ENCODE measurements at regions of chr9 and their contacts with region 1.

Region 1: GRCh38 chr9:34591248-34591916 is 1.9 kb upstream of the CNTFR start:
- DNase-seq: peak; percentile 89
- H3K4me3 ChIP-seq: peak overlapping the region; percentile 31
- H3K27ac ChIP-seq: no peak overlapping the region
- H3K4me1 ChIP-seq: peaks cover 18% of the 10 kb centered on the region
- H3K27me3 ChIP-seq: peaks cover 53% of the 10 kb centered on the region
- CTCF ChIP-seq: peak; percentile 89

Region 2: DNA sequence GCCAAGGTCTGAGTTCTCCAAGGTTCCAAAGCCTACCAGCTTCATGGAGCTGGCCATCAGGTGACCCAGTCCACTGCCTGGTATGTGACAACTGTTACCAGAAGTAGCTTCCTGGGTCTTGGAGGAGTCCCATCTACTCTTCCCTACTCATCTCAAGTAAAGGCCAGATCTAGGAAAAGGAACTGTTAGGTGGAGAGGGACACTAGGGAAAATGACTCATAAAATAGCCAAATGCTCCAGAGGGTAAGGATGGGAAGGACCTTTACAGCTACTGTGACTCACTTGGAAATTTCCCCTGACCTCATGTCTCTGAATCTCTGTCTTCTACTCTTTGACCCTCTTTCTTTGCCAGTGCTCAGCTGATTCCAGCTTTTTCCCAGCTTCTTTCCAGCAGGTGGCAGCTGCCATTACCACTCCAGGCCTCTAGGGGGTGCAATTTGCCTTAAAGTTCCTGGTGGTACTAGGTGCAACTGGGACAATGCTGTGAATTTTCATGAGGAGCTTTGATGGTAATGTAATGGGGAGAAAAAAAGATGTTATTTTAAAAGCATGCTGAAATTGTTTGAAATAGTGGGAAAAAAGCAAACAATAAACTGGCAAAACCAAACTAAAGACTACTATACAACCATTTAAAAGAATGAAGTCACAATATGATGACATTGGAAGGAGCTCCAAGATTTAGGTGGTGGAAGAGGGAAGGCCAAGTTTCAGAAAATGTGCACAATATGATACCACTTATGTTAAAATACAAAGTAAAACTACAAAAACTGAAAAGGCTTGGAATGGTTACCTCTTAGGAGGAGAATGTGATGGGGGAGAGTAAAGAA is 187.6 kb before region 1 on chr9:
- intact Hi-C with region 1: loop called (anchors 5 kb)
- DNase-seq: peak; percentile 73
- H3K4me3 ChIP-seq: no peak overlapping the region
- H3K27ac ChIP-seq: no peak overlapping the region
- H3K4me1 ChIP-seq: no peaks in the 10 kb centered on the region
- H3K27me3 ChIP-seq: no peaks in the 10 kb centered on the region
- CTCF ChIP-seq: peak; percentile 98

Region 3: GRCh38 chr9:34437006-34437925 is 154.1 kb before region 1 on chr9:
- intact Hi-C with region 1: loop called (anchors 5 kb)
- DNase-seq: peak; percentile 65
- H3K4me3 ChIP-seq: no peak overlapping the region
- H3K27ac ChIP-seq: no peak overlapping the region
- H3K4me1 ChIP-seq: no peaks in the 10 kb centered on the region
- H3K27me3 ChIP-seq: no peaks in the 10 kb centered on the region
- CTCF ChIP-seq: peak; percentile 73

Region 4: DNA sequence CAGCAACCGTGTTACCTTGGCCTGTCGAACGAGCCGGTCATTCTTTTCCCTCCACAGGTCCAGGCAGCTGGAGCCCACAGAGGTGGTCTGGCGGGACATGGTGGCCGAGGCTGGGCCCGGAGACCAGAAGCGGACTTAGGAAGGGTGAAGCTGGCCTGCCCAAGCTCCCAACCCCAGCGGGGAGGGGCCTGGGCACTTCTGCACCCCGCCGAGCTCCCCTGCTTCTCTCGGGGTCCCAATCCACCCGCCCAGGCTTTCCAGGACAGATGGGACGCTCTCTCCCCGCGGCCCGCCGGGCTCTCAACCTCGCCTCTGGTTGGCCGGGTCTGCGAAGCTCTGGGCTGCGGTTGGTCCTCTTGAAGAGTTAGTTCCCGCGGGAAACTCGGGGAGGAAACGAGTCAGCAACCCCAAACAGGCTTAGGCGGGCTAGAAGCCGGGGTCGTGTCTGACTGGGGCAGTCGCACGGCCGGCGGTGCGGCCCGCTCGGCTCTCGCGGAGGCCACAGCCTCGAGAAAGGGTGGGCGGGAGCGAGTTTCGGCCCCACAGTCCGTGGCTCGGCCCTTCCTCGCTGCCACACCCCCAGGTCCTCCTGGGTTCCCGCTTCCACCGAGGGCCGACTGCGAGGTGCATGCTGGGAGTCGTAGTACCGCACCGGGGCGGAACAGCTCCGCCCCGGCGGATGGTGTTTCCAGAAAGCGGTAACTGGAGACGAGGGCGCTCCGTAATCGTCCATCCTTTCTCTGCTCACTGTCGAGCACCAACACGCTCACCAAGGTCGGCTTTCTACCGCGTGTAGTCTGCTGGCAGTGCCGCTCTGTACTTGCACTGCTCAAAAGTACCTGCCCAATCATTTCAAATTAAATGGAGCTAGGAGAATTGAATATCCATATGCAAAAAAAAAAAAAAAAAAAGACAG is 488.3 kb after region 1 on chr9 and contains the start of gene FANCG:
- intact Hi-C with region 1: no loop called
- DNase-seq: peak; percentile 95
- H3K4me3 ChIP-seq: peak within 1 kb of the TSS; percentile 89
- H3K27ac ChIP-seq: peak within 1 kb of the TSS; percentile 84
- H3K4me1 ChIP-seq: peaks cover 6% of the 10 kb centered on the region
- H3K27me3 ChIP-seq: no peaks in the 10 kb centered on the region
- CTCF ChIP-seq: no peak
- total RNA-seq, gene FANCG: 11.4 to 47.5 TPM

Region 5: DNA sequence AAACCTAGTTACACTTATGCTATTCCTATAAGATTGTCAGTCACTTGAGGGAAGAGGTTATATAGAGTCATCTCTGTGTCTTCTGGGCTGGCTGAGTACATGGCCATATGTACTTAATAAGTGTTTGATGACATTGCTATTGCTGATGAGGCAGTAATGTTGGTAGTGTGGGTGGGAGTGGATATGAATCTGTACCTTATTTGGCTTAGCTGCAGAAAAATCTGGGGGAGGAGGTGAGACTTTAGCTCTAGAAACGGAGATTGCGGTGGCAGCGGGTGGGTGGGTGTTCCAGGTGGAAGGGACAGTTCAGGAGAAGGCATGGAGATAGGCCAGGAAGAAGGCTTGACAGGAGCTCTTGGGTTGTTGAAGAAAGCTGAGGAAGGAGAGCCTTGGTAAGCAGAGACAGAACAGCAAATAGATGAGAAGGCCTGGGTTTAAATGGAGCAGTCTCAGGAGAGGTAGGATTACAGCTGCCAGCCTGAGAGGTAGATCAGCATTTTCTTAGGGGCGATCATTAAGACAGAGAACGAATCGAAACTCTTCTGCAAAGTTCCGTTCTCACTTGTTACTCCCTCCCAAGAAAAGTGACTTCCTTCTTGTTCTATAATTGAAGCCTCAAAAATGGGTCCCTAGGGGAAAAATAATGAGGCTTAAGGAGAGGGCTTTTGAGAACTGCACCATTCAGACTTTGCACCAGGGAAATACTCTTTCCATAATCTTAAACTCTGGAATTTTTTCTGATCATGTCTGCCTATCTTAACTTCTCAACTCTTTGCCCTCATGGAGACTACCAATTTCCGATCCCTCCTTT is 730.9 kb after region 1 on chr9:
- intact Hi-C with region 1: no loop called
- DNase-seq: no peak
- H3K4me3 ChIP-seq: no peak overlapping the region
- H3K27ac ChIP-seq: no peak overlapping the region
- H3K4me1 ChIP-seq: no peaks in the 10 kb centered on the region
- H3K27me3 ChIP-seq: no peaks in the 10 kb centered on the region
- CTCF ChIP-seq: no peak